HepG2 (cell line): ENCODE measurements at regions of chr20 and their contacts with region 1.

Region 1: GRCh38 chr20:5529331-5530148 is 212.8 kb upstream of the PROKR2 start:
- DNase-seq: peak; percentile 84
- ATAC-seq: peak; percentile 94
- H3K4me3 ChIP-seq: peak overlapping the region; percentile 20 to 62 (median 46)
- H3K27ac ChIP-seq: peak overlapping the region; percentile 5
- H3K4me1 ChIP-seq: peaks cover 25% of the 10 kb centered on the region; the same call in 1 of the 2 replicates
- H3K27me3 ChIP-seq: peaks cover 3 to 14% of the 10 kb centered on the region in 2 experiments; a peak in 3 of 5 replicates
- CTCF ChIP-seq: peak; percentile 99
- EP300 ChIP-seq: no peak
- POLR2A ChIP-seq: no peak
- RAD21 ChIP-seq: peak; percentile 85

Region 2: DNA sequence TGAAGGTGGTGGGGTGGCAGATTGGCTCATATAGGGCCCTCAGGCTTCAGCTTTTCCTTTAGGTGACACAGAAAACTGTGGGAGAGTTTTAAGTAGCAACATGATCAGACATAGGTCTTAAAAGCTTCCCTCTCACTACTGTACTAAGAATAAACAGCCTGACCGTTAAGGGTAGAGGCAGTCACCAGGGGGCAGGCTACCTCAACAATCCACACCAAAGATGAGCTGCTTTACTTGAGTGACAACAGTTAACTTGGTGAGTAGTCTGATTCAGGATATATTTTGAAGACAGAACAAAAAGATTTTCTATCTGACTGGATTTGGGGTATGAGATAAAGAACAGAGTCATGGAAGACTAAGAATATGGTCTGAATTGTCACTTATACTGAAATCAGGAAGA is 27.6 kb after region 1 on chr20:
- CTCF ChIA-PET with region 1: interaction called, 10 read pairs
- POLR2A ChIA-PET with region 1: no interaction called
- in situ Hi-C with region 1: no loop called
- intact Hi-C with region 1: loop called (anchors 1 kb)
- DNase-seq: peak; percentile 61
- ATAC-seq: peak; percentile 98
- H3K4me3 ChIP-seq: no peak overlapping the region
- H3K27ac ChIP-seq: no peak overlapping the region
- H3K4me1 ChIP-seq: no peaks in the 10 kb centered on the region
- H3K27me3 ChIP-seq: no peaks in the 10 kb centered on the region
- CTCF ChIP-seq: peak; percentile 87
- EP300 ChIP-seq: no peak
- POLR2A ChIP-seq: no peak
- RAD21 ChIP-seq: peak; percentile 88

Region 3: DNA sequence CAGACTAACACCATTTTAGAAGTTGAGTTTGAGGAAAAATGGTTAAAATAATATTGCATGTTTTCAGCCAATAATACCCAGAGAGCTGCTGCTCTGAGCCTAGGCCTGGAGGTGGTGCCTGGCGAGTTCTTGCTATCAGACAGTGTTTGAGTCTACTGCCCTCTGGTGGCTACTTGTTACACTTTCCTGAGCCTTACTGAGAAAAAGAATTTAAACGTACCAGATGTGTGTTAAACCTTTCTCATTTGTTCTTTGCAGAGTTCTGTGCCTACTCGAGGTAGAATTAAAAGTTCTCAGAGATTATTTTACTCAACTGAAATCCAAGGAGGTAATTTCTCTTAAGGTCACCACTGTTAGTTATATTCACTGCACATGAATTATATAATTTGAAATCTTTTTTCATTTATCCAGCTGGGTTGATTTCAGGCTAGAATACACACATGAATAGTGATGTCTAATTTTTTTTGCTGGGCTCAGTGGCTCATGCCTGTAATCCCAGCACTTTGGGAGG is 258.9 kb after region 1 on chr20:
- CTCF ChIA-PET with region 1: interaction called, 49 read pairs
- POLR2A ChIA-PET with region 1: no interaction called
- in situ Hi-C with region 1: no loop called
- intact Hi-C with region 1: loop called (anchors 1 kb)
- DNase-seq: peak; percentile 94
- ATAC-seq: peak; percentile 99
- H3K4me3 ChIP-seq: no peak overlapping the region
- H3K27ac ChIP-seq: no peak overlapping the region
- H3K4me1 ChIP-seq: peaks cover 33% of the 10 kb centered on the region
- H3K27me3 ChIP-seq: no peaks in the 10 kb centered on the region
- CTCF ChIP-seq: peak; percentile 95
- EP300 ChIP-seq: no peak
- POLR2A ChIP-seq: no peak
- RAD21 ChIP-seq: peak; percentile 98

Region 4: GRCh38 chr20:6008254-6008653 is 478.7 kb after region 1 on chr20:
- CTCF ChIA-PET with region 1: no interaction called
- POLR2A ChIA-PET with region 1: interaction called, 6 read pairs
- in situ Hi-C with region 1: no loop called
- intact Hi-C with region 1: loop called (anchors 1 kb)
- DNase-seq: peak; percentile 86
- ATAC-seq: no peak
- H3K4me3 ChIP-seq: peak overlapping the region; percentile 86 to 98 (median 97)
- H3K27ac ChIP-seq: peak overlapping the region; percentile 12
- H3K4me1 ChIP-seq: peaks cover 54% of the 10 kb centered on the region
- H3K27me3 ChIP-seq: no peaks in the 10 kb centered on the region; a peak in 1 of 5 replicates
- CTCF ChIP-seq: no peak
- EP300 ChIP-seq: peak in 1 of 2 experiments; percentile 77; a peak in 1 of 4 replicates
- POLR2A ChIP-seq: no peak
- RAD21 ChIP-seq: no peak

Region 5: DNA sequence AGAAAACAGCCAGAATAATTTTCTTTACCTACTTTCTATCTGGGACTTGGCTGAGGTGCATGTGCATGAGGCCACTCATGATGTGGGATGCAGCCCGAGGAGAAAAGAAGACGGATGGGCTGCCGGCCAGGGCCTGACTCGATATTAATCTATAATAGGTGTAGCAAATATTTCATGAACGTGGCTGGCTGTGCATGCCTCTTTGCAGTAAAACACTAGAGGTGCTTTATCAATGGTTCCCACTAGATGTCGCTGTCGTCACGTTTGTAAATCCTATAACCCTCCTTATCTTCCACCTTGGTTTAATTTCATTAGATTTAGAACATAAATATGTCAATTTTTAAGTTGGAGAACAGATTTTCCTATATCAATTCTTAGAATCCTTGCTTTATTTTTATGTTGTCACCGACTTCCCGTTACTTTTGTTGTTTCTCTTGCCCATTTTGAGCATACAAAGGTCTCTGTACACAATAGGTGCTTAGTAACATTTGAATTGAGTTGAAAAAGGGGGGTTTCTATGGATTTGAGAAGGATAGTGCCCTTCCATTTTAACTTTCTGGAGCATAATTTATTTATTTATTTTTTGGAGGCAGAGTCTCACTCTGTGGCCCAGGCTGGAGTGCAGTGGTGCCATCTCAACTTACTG is 612.9 kb after region 1 on chr20:
- CTCF ChIA-PET with region 1: no interaction called
- POLR2A ChIA-PET with region 1: no interaction called
- in situ Hi-C with region 1: no loop called
- intact Hi-C with region 1: loop called (anchors 2 kb)
- DNase-seq: peak; percentile 70
- ATAC-seq: peak; percentile 89
- H3K4me3 ChIP-seq: no peak overlapping the region
- H3K27ac ChIP-seq: no peak overlapping the region
- H3K4me1 ChIP-seq: no peaks in the 10 kb centered on the region
- H3K27me3 ChIP-seq: no peaks in the 10 kb centered on the region
- CTCF ChIP-seq: peak; percentile 87
- EP300 ChIP-seq: no peak
- POLR2A ChIP-seq: no peak
- RAD21 ChIP-seq: no peak; the same call in 1 of the 2 replicates